Naive thymus-derived CD4-positive, alpha-beta T cell (primary cell): ENCODE measurements at regions of chr14 and their contacts with region 1.

Region 1: GRCh38 chr14:20956376-20956976 is 1.2 kb downstream of the RNASE2 start:
- DNase-seq: peak in 6 of 9 donors; percentile 3 to 31 (median 25)
- ATAC-seq: peak; percentile 47
- H3K4me3 ChIP-seq: no peak overlapping the region
- H3K4me3 Mint-ChIP-seq: peak overlapping the region in 9 of 10 donors; percentile 26 to 76 (median 42)
- H3K27ac ChIP-seq: no peak overlapping the region
- H3K27ac Mint-ChIP-seq: peak overlapping the region in 7 of 9 donors; percentile 0 to 81 (median 9)
- H3K4me1 ChIP-seq: peaks cover 0 to under 1% of the 10 kb centered on the region in 2 donors
- H3K4me1 Mint-ChIP-seq: peaks cover 19 to 28% (median 22%) of the 10 kb centered on the region in 7 donors
- H3K27me3 ChIP-seq: no peaks in the 10 kb centered on the region
- H3K27me3 Mint-ChIP-seq: peaks cover 0 to 26% (median 18%) of the 10 kb centered on the region in 5 donors

Region 2: GRCh38 chr14:20550926-20551325 is 405.6 kb before region 1 on chr14:
- CTCF ChIA-PET with region 1: no interaction called
- POLR2A ChIA-PET with region 1: no interaction called
- intact Hi-C with region 1: no loop called
- DNase-seq: no peak
- ATAC-seq: no peak
- H3K4me3 ChIP-seq: no peak overlapping the region
- H3K4me3 Mint-ChIP-seq: no peak overlapping the region
- H3K27ac ChIP-seq: no peak overlapping the region
- H3K27ac Mint-ChIP-seq: no peak overlapping the region
- H3K4me1 ChIP-seq: no peaks in the 10 kb centered on the region
- H3K4me1 Mint-ChIP-seq: no peaks in the 10 kb centered on the region
- H3K27me3 ChIP-seq: no peaks in the 10 kb centered on the region
- H3K27me3 Mint-ChIP-seq: peaks cover 0 to 8% (median 0%) of the 10 kb centered on the region in 5 donors

Region 3: DNA sequence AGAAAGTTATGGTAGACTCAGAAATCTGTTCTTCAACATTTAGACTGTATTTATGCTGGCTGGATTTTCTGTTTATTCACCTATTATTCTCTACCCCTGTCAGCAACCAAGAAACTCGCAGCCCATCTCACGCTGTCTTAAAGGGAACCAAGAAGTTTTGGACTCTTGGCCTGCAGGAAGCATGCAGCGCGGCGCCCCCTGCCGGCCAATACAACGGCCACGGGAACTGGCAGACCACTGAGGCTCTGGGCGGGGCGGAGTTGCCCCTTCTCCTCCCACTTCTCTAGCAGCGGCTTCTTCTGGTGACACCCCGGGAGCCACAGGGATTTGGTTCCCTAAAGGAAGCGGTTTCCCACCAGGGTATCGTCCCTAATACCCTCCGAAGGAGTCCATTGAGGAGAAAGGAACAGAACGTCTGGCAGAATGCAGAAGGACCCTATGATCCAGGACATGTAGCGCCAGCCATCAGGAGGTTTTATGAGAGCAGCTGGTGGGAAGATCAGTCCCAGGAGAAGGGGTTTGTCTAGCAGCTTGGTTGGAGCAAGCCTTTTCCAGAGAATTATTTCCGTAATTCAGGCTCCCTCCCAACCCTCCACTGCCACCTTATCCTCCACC is 22.2 kb before region 1 on chr14:
- CTCF ChIA-PET with region 1: no interaction called
- POLR2A ChIA-PET with region 1: no interaction called
- intact Hi-C with region 1: loop called in 1 of 2 experiments (anchors 2 kb)
- DNase-seq: peak in 4 of 9 donors; percentile 4 to 27 (median 10)
- ATAC-seq: no peak
- H3K4me3 ChIP-seq: no peak overlapping the region
- H3K4me3 Mint-ChIP-seq: no peak overlapping the region
- H3K27ac ChIP-seq: no peak overlapping the region
- H3K27ac Mint-ChIP-seq: no peak overlapping the region
- H3K4me1 ChIP-seq: no peaks in the 10 kb centered on the region
- H3K4me1 Mint-ChIP-seq: peaks cover 0 to 2% (median 0%) of the 10 kb centered on the region in 7 donors
- H3K27me3 ChIP-seq: no peaks in the 10 kb centered on the region
- H3K27me3 Mint-ChIP-seq: peaks cover 0 to 8% (median 7%) of the 10 kb centered on the region in 5 donors